AG04449 (cell line): ENCODE measurements at regions of chr3 and their contacts with region 1.

Region 1: GRCh38 chr3:27134165-27134796 is 234.9 kb downstream of the NEK10 start:
- DNase-seq: no peak
- H3K4me3 ChIP-seq: no peak overlapping the region
- CTCF ChIP-seq: peak; percentile 78

Region 2: GRCh38 chr3:26799679-26800317 is 334.5 kb before region 1 on chr3:
- CTCF ChIA-PET with region 1: no interaction called
- POLR2A ChIA-PET with region 1: no interaction called
- DNase-seq: no peak
- H3K4me3 ChIP-seq: no peak overlapping the region
- CTCF ChIP-seq: no peak

Region 3: GRCh38 chr3:27046351-27046750 is 87.9 kb before region 1 on chr3:
- CTCF ChIA-PET with region 1: no interaction called
- POLR2A ChIA-PET with region 1: no interaction called
- DNase-seq: no peak
- H3K4me3 ChIP-seq: no peak overlapping the region
- CTCF ChIP-seq: no peak

Region 4: DNA sequence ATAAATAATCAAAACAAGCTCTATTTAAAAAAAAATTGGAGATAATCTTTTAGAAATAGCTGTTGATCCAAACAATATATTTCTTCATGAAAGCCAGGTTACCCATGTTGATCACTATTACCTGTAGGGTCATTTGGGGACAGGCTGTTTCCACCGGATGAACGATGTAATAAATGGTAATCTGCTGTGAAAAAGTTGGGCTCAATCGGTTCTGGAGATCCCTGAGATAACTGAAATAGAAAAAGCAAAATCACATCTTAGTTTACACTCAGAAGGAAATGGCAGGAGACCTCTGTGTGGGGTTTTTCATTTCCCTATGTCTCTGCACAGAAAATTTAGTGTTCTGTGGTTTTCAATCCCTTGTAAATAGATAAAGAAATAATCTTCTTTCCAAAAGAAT is 14.6 kb before region 1 on chr3:
- CTCF ChIA-PET with region 1: interaction called, 14 read pairs
- POLR2A ChIA-PET with region 1: no interaction called
- DNase-seq: no peak
- H3K4me3 ChIP-seq: no peak overlapping the region
- CTCF ChIP-seq: no peak

Region 5: GRCh38 chr3:27147215-27147614 is 12.9 kb after region 1 on chr3:
- CTCF ChIA-PET with region 1: interaction called, 20 read pairs
- POLR2A ChIA-PET with region 1: no interaction called
- DNase-seq: no peak
- H3K4me3 ChIP-seq: no peak overlapping the region
- CTCF ChIP-seq: no peak

Region 6: DNA sequence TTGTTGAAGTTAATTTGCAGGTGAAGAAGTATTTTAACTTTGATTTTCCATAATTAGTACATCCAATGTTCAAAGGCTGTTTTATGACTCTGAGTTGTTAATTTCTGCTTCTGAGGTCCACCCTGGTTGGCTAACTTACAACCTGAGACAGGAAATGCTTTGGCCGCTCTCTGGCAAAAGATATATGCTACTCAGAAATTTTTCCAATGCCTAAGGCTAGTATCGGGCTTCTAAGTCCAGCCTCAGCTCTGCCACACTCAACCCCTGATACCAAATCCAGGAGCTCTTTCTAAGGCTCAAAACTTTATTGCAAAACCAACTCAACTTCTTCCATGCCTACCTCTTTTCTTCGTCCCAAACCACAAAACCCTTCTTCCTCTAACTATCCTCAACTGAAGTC is 42.0 kb after region 1 on chr3:
- CTCF ChIA-PET with region 1: interaction called, 10 read pairs
- POLR2A ChIA-PET with region 1: no interaction called
- DNase-seq: no peak
- H3K4me3 ChIP-seq: no peak overlapping the region
- CTCF ChIP-seq: no peak

Region 7: GRCh38 chr3:27253831-27254230 is 119.5 kb after region 1 on chr3:
- CTCF ChIA-PET with region 1: interaction called, 248 read pairs
- POLR2A ChIA-PET with region 1: no interaction called
- DNase-seq: no peak
- H3K4me3 ChIP-seq: no peak overlapping the region
- CTCF ChIP-seq: peak; percentile 62

Region 8: GRCh38 chr3:27279123-27279522 is 144.8 kb after region 1 on chr3:
- CTCF ChIA-PET with region 1: interaction called, 45 read pairs
- POLR2A ChIA-PET with region 1: no interaction called
- DNase-seq: no peak
- H3K4me3 ChIP-seq: no peak overlapping the region
- CTCF ChIP-seq: peak; percentile 15

Region 9: DNA sequence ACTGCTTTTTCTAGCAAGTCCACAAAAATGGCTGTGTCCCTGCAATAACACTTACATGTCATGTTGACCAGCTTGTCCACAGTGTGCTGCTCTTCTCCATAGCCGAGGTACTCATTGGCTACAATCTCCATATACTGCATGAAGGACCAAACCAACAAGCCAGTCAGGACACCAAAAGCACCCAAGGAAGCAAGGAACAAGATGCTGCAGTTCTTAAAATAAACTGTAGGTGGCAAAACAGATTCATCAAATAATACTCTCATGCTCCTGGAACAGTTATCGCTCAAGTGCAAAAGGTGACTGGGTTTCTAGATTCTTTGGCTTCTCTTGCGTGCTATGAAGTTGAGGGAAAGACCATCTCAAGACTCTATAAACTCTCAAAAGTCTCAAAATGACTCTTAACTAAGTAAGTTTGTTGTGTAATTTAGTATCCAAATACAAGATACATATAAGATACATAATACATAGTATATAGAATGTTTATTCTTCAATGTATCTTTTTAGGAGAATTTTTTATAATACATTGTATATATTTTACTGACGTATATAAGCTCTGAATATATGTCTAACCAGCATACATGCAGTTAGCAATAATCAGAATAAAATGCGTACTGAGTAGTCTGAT is 177.9 kb after region 1 on chr3:
- CTCF ChIA-PET with region 1: interaction called, 10 read pairs
- POLR2A ChIA-PET with region 1: no interaction called
- DNase-seq: peak; percentile 46
- H3K4me3 ChIP-seq: no peak overlapping the region
- CTCF ChIP-seq: peak; percentile 54